Mammary epithelial cell (primary cell): ENCODE measurements at regions of chr20 and their contacts with region 1.

Region 1: GRCh38 chr20:11229772-11230171 is 556.0 kb upstream of the JAG1 start:
- DNase-seq: peak; percentile 98
- H3K4me3 ChIP-seq: no peak overlapping the region
- H3K27ac ChIP-seq: peak overlapping the region; percentile 44
- H3K4me1 ChIP-seq: peaks cover 14% of the 10 kb centered on the region
- H3K27me3 ChIP-seq: no peaks in the 10 kb centered on the region
- CTCF ChIP-seq: no peak

Region 2: DNA sequence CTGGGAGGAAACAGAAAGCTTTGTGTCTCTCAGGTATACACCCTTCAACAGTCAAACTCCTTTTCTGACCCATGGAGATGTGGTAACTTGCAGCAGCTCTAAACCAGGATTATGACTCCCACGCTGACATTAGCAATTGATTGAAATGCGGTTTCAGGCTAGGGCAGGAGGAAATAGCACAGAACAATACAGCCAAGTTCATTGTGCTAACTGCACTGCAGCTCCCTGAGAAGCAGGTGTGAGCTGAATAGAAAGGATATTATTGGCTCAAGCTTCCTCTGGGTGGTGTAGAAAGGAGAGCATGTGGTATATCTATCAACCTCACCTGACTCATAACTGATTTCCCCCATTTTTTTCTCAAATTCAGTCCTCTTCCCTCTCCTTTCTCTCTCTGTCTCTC is 75.6 kb after region 1 on chr20:
- CTCF ChIA-PET with region 1: no interaction called
- dilution Hi-C with region 1: loop called (anchors 10 kb)
- in situ Hi-C with region 1: no loop called
- intact Hi-C with region 1: no loop called
- DNase-seq: peak; percentile 93
- H3K4me3 ChIP-seq: no peak overlapping the region
- H3K27ac ChIP-seq: peak overlapping the region; percentile 52
- H3K4me1 ChIP-seq: peaks cover 31% of the 10 kb centered on the region
- H3K27me3 ChIP-seq: no peaks in the 10 kb centered on the region
- CTCF ChIP-seq: no peak

Region 3: GRCh38 chr20:11484479-11484878 is 254.7 kb after region 1 on chr20:
- CTCF ChIA-PET with region 1: no interaction called
- dilution Hi-C with region 1: no loop called
- in situ Hi-C with region 1: no loop called
- intact Hi-C with region 1: no loop called
- DNase-seq: no peak
- H3K4me3 ChIP-seq: no peak overlapping the region
- H3K27ac ChIP-seq: no peak overlapping the region
- H3K4me1 ChIP-seq: no peaks in the 10 kb centered on the region
- H3K27me3 ChIP-seq: no peaks in the 10 kb centered on the region
- CTCF ChIP-seq: no peak